HepG2 (cell line): ENCODE measurements at regions of chr14 and their contacts with region 1.

Region 1: DNA sequence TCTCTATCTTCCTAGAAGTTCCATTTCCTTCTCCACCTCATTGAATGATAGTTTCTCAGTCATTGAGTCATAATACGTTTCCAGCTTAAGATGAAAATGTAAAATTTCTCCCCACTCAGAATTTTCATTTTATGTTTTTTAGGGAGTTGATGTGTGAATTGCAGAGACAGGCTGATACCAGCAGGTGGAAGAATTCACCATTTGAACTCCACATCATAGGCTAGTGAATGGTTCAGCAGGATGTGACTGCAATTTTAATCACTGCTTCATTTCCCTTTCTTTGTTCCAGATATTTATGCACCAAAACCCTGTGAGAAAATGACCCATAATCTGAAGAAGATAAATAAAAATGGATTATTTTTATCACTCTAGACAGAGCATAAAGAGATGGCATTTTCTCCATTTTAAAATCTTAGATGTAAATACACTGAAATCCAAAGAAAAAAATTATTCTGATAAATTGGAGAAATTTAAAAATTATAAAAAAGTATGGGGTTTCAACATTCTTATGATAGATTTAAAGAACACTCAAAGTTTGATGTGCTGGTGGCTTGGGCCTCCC is 10.6 kb upstream of the PYGL start:
- DNase-seq: peak; percentile 33
- ATAC-seq: peak; percentile 66
- H3K4me3 ChIP-seq: 0 out of 6 replicates have a peak overlapping the region, but pooled peaks of 1 of the 3 experiments have one; percentile 27
- H3K27ac ChIP-seq: no peak overlapping the region
- H3K4me1 ChIP-seq: peaks cover 10% of the 10 kb centered on the region
- H3K27me3 ChIP-seq: no peaks in the 10 kb centered on the region
- CTCF ChIP-seq: peak; percentile 56
- EP300 ChIP-seq: no peak
- POLR2A ChIP-seq: no peak
- RAD21 ChIP-seq: no peak

Region 2: DNA sequence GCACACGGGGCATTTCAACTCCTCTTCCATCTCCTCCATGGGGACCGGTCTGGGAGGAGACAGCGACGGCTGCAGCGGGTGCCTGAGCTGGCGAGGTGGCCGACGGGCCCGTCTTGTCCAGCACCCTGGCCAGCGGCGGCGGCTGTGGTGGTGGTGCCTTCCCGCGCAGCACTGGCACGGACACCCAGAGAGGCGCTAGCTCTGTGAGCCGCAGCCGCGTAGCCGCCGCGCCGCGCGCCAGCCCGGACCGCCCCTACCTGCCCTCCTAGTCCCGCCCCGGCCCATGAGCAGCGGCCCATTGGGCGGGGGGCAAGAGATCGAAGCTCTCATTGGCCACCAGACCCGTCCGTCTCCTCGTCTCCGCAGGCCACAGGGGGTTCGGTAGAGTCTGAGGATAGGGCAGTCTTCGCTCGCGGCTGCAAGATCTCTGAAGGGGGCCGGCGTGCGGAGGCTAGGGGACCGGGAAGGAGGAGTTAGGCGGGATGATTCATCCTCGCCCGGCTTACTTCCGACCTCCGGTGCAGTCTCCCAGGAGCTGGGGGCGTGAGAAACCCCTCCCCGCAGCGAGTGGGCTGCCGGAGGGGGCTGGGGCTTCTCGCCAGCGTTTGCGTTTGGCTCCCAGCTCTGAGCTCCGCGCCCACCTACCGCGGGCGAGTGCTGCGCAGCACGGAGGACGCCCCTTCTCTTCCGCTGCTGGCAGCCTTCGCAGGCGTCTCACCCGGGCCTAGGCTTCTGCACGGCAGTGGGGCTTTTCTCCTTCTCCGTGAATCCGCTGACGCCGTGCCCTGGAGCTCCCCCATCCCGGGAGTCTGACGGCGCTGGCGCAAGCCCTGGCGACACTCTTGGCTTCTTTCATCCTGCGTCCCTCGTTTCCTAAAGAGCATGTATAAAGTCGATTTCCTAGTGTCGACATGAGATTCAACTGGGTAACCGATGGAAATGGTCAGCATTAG is 140.3 kb after region 1 on chr14 and contains the start of gene TRIM9:
- CTCF ChIA-PET with region 1: no interaction called
- POLR2A ChIA-PET with region 1: no interaction called
- in situ Hi-C with region 1: no loop called
- intact Hi-C with region 1: loop called (anchors 10 kb)
- DNase-seq: peak; percentile 81
- ATAC-seq: peak; percentile 98
- H3K4me3 ChIP-seq: peak within 1 kb of the TSS; percentile 54 to 78 (median 63)
- H3K27ac ChIP-seq: no peak within 1 kb of the TSS
- H3K4me1 ChIP-seq: peaks cover 7% of the 10 kb centered on the region
- H3K27me3 ChIP-seq: peaks cover 0 to 12% of the 10 kb centered on the region in 2 experiments; a peak in 3 of 5 replicates
- CTCF ChIP-seq: peak; percentile 12; the same call in 1 of the 2 replicates
- EP300 ChIP-seq: no peak
- POLR2A ChIP-seq: no peak
- RAD21 ChIP-seq: 0 out of 2 replicates have a peak, but pooled peaks have one; percentile 28
- total RNA-seq, gene TRIM9: 0.04 TPM in 1 of 2 replicates, not detected in the other

Region 3: GRCh38 chr14:51129130-51129529 is 174.2 kb after region 1 on chr14:
- CTCF ChIA-PET with region 1: no interaction called
- POLR2A ChIA-PET with region 1: no interaction called
- in situ Hi-C with region 1: no loop called
- intact Hi-C with region 1: loop called (anchors 1 kb)
- DNase-seq: peak; percentile 8
- ATAC-seq: peak; percentile 98
- H3K4me3 ChIP-seq: no peak overlapping the region
- H3K27ac ChIP-seq: no peak overlapping the region
- H3K4me1 ChIP-seq: no peaks in the 10 kb centered on the region
- H3K27me3 ChIP-seq: no peaks in the 10 kb centered on the region; a peak in 1 of 5 replicates
- CTCF ChIP-seq: peak; percentile 42
- EP300 ChIP-seq: no peak
- POLR2A ChIP-seq: no peak
- RAD21 ChIP-seq: no peak

Region 4: DNA sequence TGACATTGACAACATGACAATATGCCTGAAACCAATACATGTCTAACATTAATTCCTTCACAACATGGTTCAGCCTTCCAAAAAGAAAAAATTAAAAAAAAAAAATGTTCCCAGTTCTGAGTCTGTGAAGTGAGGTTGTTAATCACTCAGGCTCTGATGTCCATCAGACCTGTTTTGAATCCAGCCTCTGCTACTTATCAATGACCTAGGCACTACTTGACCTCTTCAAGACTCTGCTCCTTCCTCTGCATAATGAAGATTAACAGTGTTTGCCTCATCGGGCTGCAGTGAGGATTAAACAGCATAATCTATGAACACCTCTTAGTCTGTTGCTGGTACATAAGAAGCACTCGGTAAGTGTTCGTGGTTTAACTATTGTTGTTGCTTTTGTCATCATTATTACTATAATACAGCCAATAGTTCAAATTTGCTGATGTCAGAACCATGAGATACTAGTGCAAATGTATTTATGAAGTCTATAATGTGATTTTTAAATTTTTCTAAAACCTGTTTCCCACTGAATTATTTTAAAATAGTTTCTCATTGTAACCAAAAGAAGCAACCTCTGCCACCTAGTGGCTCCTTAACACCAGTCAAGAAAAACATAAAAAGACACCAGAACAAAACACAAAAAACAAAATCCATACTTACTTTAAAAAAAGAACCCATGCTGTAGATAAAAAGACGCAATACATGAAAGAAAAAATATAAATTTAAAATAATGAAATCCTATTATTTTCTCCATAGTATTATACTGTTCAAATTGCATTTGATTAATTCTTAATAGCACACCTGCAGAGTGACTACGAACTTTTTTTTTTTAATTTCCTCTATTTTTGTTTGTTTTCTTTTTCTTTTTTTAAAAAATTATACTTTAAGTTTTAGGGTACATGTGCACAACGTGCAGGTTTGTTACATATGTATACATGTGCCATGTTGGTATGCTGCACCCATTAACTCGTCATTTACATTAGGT is 264.9 kb after region 1 on chr14:
- CTCF ChIA-PET with region 1: no interaction called
- POLR2A ChIA-PET with region 1: no interaction called
- in situ Hi-C with region 1: no loop called
- intact Hi-C with region 1: loop called (anchors 10 kb)
- DNase-seq: peak; percentile 7
- ATAC-seq: no peak
- H3K4me3 ChIP-seq: no peak overlapping the region
- H3K27ac ChIP-seq: no peak overlapping the region
- H3K4me1 ChIP-seq: no peaks in the 10 kb centered on the region
- H3K27me3 ChIP-seq: no peaks in the 10 kb centered on the region
- CTCF ChIP-seq: peak; percentile 36; the same call in 1 of the 2 replicates
- EP300 ChIP-seq: no peak
- POLR2A ChIP-seq: no peak
- RAD21 ChIP-seq: no peak